ENCODE measurements at regions of chr2 and their contacts with region 1.

Region 1: DNA sequence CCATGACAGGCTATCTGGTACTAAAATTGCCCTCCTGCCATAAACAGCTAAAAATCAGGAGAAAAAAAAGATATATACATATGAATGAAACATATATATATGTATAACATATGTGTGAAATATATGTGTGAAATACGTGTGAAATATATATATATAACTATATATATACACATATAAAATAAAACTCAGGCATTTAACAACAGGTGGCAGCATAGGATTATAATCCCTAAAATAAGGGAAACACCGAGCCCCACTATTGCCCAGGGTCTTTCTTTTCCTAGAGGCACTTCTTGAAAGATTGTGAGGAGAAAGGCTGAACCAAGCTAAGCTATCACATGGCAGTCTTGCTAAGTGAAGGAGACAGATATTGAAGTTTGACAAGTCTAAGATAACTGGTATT is 65.9 kb upstream of the CYTIP start:
- DNase-seq: no peak
- ATAC-seq: no peak
- H3K4me3 Mint-ChIP-seq: no peak overlapping the region
- H3K27ac Mint-ChIP-seq: no peak overlapping the region
- H3K4me1 Mint-ChIP-seq: peaks cover 3% of the 10 kb centered on the region
- H3K27me3 Mint-ChIP-seq: peaks cover 14% of the 10 kb centered on the region

Region 2: GRCh38 chr2:157497638-157498314 is 12.0 kb before region 1 on chr2:
- CTCF ChIA-PET with region 1: interaction called, 10 read pairs
- DNase-seq: no peak
- ATAC-seq: peak; percentile 94
- H3K4me3 Mint-ChIP-seq: no peak overlapping the region
- H3K27ac Mint-ChIP-seq: no peak overlapping the region
- H3K4me1 Mint-ChIP-seq: peaks cover 28% of the 10 kb centered on the region
- H3K27me3 Mint-ChIP-seq: no peaks in the 10 kb centered on the region

Region 3: DNA sequence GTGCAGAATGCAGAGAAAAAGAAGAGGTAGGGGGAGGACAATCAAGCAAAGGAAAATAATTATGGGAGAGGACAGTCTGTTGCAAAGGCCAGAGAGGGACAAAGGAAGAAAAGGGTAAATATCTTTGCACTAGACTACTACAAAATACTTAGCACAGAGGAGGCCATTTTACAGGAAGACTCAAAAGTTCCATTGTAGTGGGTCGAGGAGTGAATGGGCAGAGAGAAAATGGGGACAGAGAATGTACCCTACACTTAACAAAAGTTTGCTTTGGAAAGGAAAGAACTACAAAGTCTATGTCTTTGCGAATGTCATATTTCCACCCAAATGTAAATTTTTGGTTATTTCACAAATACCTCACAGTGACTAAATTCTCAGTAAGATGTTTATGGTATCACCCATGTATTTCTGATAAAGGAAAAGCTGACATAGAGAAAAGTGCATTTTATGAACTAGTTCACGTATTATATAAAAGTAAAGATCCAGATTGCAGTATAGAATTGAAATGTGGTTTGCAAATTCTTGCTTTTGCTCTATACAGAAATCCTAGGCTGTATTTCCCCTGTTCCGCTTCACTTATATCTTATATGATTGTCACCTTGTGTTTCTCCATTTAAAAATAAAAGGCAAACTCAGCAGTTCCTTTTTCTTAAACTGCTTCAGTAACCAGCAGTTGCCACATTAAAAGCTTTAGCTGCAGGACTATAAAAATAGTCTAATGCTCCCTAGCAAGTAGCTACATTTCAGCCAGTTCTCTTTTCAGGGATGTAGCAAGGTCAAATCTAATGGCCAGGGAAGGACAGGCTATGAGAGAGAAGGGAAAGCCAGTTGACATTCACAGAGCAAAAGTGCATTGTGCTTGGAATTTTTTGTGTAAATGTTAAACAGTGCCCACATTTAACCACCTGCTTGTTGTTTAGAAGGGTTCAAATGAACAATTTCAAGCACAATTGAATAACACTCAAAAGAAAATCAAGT is 13.8 kb after region 1 on chr2:
- CTCF ChIA-PET with region 1: no interaction called
- DNase-seq: no peak
- ATAC-seq: no peak
- H3K4me3 Mint-ChIP-seq: no peak overlapping the region
- H3K27ac Mint-ChIP-seq: no peak overlapping the region
- H3K4me1 Mint-ChIP-seq: no peaks in the 10 kb centered on the region
- H3K27me3 Mint-ChIP-seq: peaks cover 8% of the 10 kb centered on the region

Region 4: DNA sequence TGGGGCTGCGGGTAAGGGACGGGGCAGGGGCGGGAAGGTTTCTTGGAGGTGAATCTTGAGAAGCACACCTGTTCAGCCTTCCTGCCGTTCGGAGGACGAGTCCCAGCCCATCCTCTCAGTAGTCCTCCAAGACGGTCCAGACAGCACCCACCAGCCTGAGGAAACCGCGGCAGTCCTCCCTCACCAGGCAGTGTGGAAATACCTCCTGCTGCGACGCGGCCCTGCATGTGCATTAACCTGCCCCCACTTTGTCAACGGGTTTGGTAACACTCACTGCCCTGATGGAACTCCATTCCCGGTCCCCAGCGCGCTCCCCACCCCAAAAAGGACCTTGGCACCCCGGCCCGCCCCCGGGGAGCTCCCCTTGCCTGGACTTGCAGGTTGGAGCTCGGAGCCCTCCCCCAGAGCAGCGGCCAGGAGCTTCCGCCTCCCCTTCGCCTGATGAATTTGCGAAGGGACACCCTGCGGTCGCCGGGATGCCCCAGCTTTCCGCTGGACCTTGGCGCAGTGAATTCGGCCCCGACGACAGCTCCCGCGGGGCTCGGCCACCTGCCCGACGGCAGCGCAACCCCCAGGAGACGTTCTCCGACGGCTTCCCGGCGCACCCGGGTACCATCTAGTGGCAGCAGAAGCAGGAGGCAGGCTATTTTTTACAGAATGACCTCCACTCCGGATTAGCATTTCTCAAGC is 87.4 kb after region 1 on chr2:
- CTCF ChIA-PET with region 1: interaction called, 12 read pairs
- DNase-seq: peak; percentile 69
- ATAC-seq: peak; percentile 94
- H3K4me3 Mint-ChIP-seq: peak overlapping the region; percentile 53
- H3K27ac Mint-ChIP-seq: no peak overlapping the region
- H3K4me1 Mint-ChIP-seq: peaks cover 15% of the 10 kb centered on the region
- H3K27me3 Mint-ChIP-seq: peaks cover 20% of the 10 kb centered on the region

Region 5: DNA sequence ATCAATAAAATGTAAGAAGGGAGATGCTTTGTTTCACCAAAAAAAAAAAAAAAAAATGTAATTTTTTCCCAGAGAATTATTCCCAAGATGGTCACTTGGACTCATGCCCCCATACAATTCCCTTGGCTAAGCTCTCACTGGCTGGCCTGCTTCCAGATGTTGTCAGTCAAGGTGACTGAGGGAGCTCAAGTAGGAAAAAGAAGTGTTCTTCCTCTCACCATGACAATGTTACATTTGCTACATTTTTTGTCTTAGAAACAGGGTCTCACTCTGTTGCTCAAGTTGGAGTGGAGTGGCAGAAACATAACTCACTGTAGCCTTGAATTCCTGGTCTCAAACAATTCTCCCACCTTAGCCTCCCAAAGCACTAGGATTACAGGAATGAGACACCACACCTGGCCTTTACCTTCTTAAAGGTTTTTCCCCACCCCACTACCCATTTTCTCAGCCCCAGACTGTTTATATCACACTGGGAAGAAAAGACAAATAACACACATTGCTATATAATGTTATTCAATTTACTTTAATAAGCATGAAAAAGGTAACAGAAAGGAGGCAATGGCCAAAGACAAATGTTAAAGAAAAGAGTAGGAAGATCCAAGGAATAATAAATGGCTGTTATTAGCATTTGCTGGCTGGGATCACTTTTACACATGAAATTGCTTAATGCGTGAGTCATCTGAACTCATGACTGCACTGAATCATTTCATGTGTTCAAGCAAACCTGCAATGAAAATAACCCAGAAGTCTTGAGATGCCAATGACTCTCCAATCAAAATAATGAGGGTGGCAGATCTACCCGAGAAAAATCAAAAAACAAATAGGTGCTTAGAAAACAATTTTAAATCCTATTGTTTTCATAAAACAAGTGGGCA is 321.2 kb after region 1 on chr2:
- CTCF ChIA-PET with region 1: no interaction called
- DNase-seq: no peak
- ATAC-seq: no peak
- H3K4me3 Mint-ChIP-seq: no peak overlapping the region
- H3K27ac Mint-ChIP-seq: no peak overlapping the region
- H3K4me1 Mint-ChIP-seq: peaks cover 14% of the 10 kb centered on the region
- H3K27me3 Mint-ChIP-seq: no peaks in the 10 kb centered on the region